HCT116 (cell line): ENCODE measurements at regions of chr2 and their contacts with region 1.

Region 1: DNA sequence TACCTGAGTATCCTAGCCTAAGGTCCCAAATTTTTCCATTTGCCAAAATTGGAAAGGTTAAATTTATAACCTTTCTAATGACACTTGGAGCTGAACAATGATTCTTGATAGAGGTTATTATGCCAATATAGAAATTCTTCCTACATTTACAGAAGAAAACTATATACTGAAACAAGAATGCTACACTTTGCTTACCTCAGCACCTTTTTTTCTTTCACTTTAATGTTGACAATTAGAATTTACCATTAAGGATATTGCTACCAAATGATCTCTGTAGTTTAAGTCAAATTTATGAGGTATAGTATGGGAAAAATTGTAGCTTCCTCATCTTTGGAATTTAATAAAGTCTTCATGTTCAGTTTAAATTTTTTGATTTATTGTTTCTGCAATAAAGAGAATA is 577.0 kb downstream of the NR4A2 start:
- DNase-seq: no peak
- ATAC-seq: no peak
- H3K4me3 ChIP-seq: no peak overlapping the region
- H3K27ac ChIP-seq: no peak overlapping the region
- H3K4me1 ChIP-seq: no peaks in the 10 kb centered on the region
- H3K27me3 ChIP-seq: no peaks in the 10 kb centered on the region
- CTCF ChIP-seq: no peak
- POLR2A ChIP-seq: no peak
- RAD21 ChIP-seq: no peak

Region 2: DNA sequence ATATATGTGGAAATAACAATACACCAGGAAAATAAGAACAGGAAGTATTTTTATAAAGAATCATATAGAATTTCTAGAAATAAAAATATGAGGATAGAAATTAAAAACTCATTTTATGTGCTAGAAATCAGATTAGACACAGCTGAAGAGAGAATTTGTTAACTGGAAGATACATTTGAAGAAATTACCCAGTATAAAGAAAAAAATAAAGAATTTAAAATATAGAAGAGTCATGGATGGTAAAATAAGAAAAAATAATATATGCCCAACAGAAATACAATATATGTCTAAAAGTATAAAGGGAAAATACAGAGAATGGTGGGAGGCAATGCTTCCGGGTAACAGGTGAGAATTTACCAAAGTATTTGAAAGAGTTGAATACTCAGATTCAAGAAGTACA is 37.2 kb after region 1 on chr2:
- CTCF ChIA-PET with region 1: no interaction called
- POLR2A ChIA-PET with region 1: no interaction called
- RAD21 ChIA-PET with region 1: no interaction called
- intact Hi-C with region 1: loop called (anchors 2 kb)
- DNase-seq: no peak
- ATAC-seq: no peak
- H3K4me3 ChIP-seq: no peak overlapping the region
- H3K27ac ChIP-seq: no peak overlapping the region
- H3K4me1 ChIP-seq: no peaks in the 10 kb centered on the region
- H3K27me3 ChIP-seq: no peaks in the 10 kb centered on the region
- CTCF ChIP-seq: no peak
- POLR2A ChIP-seq: no peak
- RAD21 ChIP-seq: no peak